Ascending aorta (tissue), 2 donors: ENCODE measurements at regions of chr19 and their contacts with region 1.

Region 1: DNA sequence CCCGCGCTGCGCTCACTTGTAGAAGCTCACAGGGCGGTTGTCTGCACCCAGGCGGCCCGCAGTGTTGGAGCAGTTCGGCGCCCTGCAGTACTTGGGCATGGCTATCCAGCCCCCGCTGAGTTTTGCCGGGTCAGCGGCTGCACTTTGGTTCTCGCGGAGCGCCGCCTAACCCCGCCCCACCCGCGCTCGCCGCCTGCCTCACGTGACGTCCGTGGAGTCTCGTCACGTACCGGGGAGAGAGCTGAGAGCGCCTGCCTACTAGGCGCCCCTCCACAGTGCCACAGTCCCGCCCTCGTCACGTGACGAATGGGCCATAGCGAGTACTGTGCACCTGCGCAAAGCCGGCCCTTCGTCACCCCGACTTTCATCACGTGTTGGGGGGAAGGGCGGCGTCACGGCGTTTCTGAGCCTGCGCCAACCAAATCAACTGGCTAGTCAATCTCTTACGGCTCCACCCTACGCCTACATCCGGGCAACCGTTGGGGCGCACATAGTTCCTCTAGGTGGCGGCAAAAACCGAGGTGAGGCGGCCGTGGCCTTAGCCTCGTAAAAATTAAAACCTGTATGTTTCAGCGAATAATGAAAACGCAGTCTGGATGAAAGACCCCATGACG is at the start of gene THAP8:
- DNase-seq: peak; percentile 100
- H3K4me3 ChIP-seq: peak within 1 kb of the TSS; percentile 71 to 80
- H3K27ac ChIP-seq: peak within 1 kb of the TSS; percentile 91 to 92
- H3K4me1 ChIP-seq: peaks cover 0 to 6% of the 10 kb centered on the region in 2 donors
- H3K27me3 ChIP-seq: no peaks in the 10 kb centered on the region
- CTCF ChIP-seq: peak; percentile 57 to 64 (median 57)
- total RNA-seq, gene THAP8: not detected

Region 2: DNA sequence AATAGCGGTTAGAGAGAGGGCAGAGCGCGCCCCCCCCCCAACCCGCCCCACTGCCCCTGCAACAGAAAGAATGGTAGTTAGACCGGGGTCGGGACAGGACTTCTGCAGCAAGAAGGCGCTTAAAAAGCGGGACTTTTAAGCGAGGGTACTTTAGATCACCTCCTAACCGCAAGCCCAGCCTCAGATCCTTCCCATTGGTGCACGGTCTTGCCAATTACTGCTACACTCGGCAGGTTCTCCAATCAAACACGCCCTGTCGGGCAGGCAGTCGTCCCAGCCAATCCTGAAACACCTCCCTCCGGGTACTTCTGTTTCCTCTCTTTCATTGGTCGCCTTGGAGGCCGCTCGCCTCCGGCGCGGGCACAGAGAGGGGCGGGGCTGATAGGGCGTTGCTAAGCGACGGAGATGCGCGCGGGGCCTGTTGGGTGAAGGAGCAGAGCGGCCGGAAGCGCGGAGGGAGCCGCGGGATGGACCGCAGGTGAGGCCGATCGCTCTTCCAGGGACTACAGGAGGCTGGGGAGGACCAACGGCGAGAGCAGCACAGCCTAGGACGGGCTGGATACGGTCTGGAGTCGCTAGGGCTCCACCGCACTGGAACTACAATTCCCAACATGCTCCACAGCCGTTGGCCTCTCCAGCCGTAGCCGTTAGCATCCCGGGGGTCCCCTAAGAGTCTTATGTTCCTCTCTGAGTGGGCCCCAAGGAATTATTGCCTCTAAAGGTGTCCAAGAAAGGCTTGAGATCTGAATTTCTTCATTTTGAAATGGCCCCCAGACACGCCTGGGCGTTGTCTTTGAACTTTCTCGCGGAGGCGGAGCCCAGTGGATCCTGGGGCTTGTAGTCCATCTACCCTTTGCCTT is 296.2 kb before region 1 on chr19 and contains the start of gene PROSER3:
- intact Hi-C with region 1: loop called (anchors 1 kb)
- DNase-seq: peak; percentile 98 to 99
- H3K4me3 ChIP-seq: peak within 1 kb of the TSS; percentile 53 to 85
- H3K27ac ChIP-seq: peak within 1 kb of the TSS; percentile 99
- H3K4me1 ChIP-seq: peaks cover 7 to 24% of the 10 kb centered on the region in 2 donors
- H3K27me3 ChIP-seq: no peaks in the 10 kb centered on the region
- CTCF ChIP-seq: no peak
- total RNA-seq, gene PROSER3: 6.5 TPM

Region 3: DNA sequence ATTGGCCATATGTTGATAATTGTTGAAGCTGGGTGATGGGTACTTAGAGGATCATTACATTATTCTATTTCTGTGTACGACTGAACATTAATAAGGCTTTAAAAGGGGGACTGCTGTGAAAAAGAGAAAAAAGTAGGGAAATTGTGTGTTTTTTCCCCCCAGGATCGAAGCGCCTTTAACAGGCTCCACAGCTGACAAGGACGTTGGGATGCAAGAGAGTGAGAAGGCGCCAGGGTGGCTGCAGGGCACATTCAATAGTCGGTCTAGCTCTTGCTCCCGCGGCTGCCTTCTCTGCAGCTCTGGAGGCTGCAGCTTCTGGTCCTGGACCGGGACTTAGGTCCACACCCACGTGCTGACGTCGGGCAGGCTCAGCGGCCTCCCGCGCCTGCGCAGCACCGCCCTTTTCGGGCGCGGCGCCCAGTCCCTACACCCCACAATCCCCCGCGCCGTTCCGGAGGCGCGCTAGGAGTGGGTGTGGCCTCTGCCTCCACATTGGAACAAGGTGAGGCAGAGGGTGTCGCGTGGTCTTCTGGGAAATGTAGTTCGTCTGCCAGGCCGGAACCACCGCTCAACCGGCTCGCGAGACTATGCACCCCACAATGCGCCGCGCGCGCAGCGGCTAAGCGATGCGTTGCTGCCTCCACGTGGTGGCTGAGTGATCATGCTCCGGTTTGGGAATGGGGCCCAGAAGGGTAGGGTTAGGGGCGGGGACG is 122.9 kb before region 1 on chr19:
- intact Hi-C with region 1: loop called (anchors 1 kb)
- DNase-seq: peak; percentile 98 to 100
- H3K4me3 ChIP-seq: peak overlapping the region in 1 of 2 donors; percentile 51
- H3K27ac ChIP-seq: peak overlapping the region in 1 of 2 donors; percentile 53
- H3K4me1 ChIP-seq: peaks cover 7 to 9% of the 10 kb centered on the region in 2 donors
- H3K27me3 ChIP-seq: no peaks in the 10 kb centered on the region
- CTCF ChIP-seq: peak; percentile 92 to 99 (median 93)

Region 4: DNA sequence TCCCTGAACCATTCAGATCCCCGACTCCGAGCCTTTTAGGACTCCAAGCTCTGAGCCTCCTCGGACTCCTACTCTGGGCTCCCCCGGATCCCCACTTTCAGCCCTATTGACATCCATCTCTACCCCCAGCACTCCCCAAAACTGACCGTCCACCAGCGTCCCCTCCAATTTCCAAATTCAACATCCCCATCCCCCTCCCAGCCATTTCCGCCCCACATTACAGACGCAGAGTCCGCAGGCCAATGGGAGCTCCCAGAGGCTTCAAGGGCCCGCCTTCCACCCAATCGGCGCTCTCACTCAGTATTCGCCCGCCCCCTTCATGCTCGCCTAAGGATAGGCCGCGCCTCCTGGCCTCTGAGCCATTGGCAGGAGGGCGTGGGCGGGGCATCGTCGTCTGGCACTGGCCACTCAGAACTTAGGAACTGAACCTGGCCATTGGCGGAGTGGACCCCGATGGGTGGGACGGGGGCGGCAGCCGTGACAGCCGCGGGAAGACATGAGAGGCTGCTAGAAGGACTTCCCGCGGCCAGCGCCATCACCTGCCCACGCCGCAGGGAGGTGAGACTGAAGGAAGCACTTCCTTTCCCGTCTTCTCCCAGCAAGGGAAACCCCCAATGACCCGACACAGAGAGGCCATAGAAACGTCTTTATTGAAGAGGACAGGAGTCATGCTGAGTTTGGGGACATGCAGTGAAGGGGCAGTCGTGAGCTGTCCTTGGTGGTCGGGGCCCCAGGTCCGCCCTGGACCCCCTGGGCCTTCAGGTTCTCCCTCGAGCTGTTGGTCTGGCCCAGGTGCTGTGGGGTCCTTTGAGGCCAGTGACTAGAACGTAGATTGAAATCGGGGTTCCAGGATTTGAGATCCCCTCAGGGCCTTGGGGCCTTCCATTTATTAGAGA is 39.9 kb before region 1 on chr19 and contains the start of gene ALKBH6:
- intact Hi-C with region 1: loop called (anchors 1 kb)
- DNase-seq: peak; percentile 99 to 100
- H3K4me3 ChIP-seq: peak within 1 kb of the TSS; percentile 58 to 76
- H3K27ac ChIP-seq: peak within 1 kb of the TSS; percentile 74 to 85
- H3K4me1 ChIP-seq: peaks cover 4 to 14% of the 10 kb centered on the region in 2 donors
- H3K27me3 ChIP-seq: no peaks in the 10 kb centered on the region
- CTCF ChIP-seq: no peak
- total RNA-seq, gene ALKBH6: 35.3 TPM

Region 5: DNA sequence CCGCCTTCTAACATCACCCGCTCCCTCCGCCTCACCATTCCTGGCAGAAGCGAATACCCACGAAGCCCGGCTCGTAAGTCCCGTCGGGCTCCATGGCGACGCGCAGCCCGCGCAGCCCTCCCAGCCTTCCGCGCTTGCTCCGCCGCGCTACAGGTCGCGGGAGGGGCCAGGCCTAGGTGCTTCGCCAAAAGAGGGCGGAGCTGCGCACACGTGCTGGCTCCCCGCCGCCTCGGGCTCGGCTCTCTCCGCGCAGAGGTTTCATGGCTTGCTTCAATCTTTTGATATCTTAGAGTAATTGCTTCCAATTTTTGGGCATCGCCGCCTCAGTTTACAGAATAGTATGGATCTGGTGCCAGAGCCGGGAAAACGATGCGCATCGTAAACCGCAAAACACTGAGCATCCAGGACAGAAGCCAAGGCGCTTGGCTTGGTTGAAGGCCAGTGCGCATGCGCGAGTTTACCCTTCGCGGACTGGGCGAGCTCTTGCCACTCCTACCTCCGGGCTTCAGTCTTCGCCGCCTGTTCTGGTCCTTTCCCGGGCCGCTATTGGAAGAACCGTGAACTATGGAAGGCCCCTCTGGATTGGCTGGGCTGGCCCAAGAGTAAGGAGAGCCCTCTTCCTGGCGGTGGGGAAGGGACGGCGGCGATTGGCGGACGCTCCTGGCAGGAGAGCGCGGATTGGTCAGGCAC is 60.7 kb after region 1 on chr19 and contains the start of gene POLR2I:
- intact Hi-C with region 1: loop called (anchors 1 kb)
- DNase-seq: peak; percentile 100
- H3K4me3 ChIP-seq: peak within 1 kb of the TSS; percentile 70 to 77
- H3K27ac ChIP-seq: peak within 1 kb of the TSS; percentile 80 to 84
- H3K4me1 ChIP-seq: peaks cover 6 to 17% of the 10 kb centered on the region in 2 donors
- H3K27me3 ChIP-seq: no peaks in the 10 kb centered on the region
- CTCF ChIP-seq: no peak
- total RNA-seq, gene POLR2I: 21.0 TPM